ENCODE measurements at regions of chr20 and their contacts with region 1.

Region 1: DNA sequence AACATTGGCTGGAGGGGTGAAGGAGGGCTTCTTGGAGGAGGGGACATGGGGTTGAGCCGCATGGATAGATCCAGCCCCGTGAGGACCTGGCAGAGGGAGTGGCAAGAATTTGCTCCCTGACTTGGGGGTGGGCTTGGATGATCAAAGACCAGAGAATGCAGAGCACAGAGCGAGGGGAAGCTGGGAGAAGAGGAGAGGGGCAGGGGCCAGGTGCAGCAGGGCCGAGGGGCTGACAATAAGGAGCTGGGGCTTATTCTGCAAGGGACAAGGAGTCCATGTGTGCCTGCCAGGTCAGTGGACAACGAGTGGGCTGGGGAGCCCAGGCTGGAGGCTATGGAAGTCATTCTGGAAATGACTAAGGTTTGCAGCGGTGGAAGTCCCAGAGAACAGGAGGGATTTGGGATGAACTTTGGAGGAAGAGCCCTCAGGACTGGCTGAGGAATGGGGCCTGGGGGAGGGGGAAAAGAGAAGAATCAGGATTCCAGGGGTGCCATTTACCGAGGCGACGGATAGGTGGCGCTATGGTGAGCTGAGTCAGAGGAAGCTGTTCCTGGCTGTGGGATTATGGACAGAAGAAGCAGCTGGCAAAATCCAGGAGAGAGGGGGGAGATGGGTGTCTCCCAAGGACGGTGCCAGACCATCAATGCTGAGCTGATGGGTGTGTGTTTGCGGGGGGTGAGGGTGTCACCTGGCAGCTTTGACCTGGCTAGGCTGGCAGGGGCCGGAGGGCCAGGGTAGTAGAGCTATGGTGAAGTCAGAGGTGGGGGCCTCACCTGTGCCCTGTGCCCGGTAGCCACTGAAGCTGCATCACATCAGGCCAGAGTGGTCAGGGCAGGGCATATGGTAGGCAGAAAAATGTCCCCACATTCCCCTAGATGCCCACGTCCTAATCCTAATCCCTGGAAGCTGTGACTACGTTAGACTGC is 7.8 kb downstream of the KCNG1 start:
- DNase-seq: peak; percentile 87
- H3K4me3 ChIP-seq: no peak overlapping the region
- H3K27ac ChIP-seq: no peak overlapping the region; a peak in 1 of 4 replicates
- H3K4me1 ChIP-seq: peaks cover 0 to 34% of the 10 kb centered on the region in 2 experiments; a peak in 1 of 4 replicates
- H3K27me3 ChIP-seq: no peaks in the 10 kb centered on the region
- CTCF ChIP-seq: peak; percentile 81
- EP300 ChIP-seq: no peak
- RAD21 ChIP-seq: peak; percentile 83

Region 2: GRCh38 chr20:50762435-50763201 is 252.4 kb before region 1 on chr20:
- CTCF ChIA-PET with region 1: no interaction called
- POLR2A ChIA-PET with region 1: no interaction called
- DNase-seq: peak; percentile 58
- H3K4me3 ChIP-seq: peak overlapping the region in 1 of 2 experiments; percentile 0; a peak in 1 of 4 replicates
- H3K27ac ChIP-seq: peak overlapping the region; percentile 56 to 80
- H3K4me1 ChIP-seq: peaks cover 10 to 30% of the 10 kb centered on the region in 2 experiments; a peak in 3 of 4 replicates
- H3K27me3 ChIP-seq: no peaks in the 10 kb centered on the region
- CTCF ChIP-seq: no peak
- EP300 ChIP-seq: no peak; a peak in 2 of 4 replicates
- RAD21 ChIP-seq: no peak; the same call in 1 of the 2 replicates

Region 3: GRCh38 chr20:50943069-50943468 is 72.0 kb before region 1 on chr20:
- CTCF ChIA-PET with region 1: no interaction called
- POLR2A ChIA-PET with region 1: no interaction called
- DNase-seq: no peak
- H3K4me3 ChIP-seq: no peak overlapping the region
- H3K27ac ChIP-seq: no peak overlapping the region
- H3K4me1 ChIP-seq: no peaks in the 10 kb centered on the region
- H3K27me3 ChIP-seq: no peaks in the 10 kb centered on the region
- CTCF ChIP-seq: no peak
- EP300 ChIP-seq: no peak
- RAD21 ChIP-seq: no peak

Region 4: GRCh38 chr20:50992733-50993457 is 22.2 kb before region 1 on chr20:
- CTCF ChIA-PET with region 1: interaction called, 118 read pairs
- POLR2A ChIA-PET with region 1: no interaction called
- DNase-seq: peak; percentile 83
- H3K4me3 ChIP-seq: no peak overlapping the region; a peak in 1 of 4 replicates
- H3K27ac ChIP-seq: no peak overlapping the region
- H3K4me1 ChIP-seq: no peaks in the 10 kb centered on the region
- H3K27me3 ChIP-seq: no peaks in the 10 kb centered on the region
- CTCF ChIP-seq: peak; percentile 67
- EP300 ChIP-seq: no peak
- RAD21 ChIP-seq: peak; percentile 79

Region 5: DNA sequence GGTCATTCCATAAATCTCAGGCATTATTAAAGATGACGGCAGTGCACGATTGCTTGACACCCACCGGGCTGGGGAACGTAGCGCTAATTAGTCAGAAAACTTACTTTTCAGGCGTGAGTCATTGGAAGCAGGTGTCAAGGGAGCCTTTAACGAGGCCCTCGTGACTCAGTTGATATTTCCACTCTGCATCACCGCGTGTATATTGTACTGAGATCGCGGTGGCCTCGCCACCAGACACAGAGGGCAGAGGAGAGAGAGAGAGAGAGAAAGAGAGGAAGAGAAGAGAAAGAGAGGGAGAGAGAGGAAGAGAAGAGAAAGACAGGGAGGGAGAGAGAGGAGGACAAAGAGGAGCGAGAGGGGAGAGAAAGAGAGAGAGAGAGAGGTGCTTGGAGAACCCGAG is 13.3 kb before region 1 on chr20:
- CTCF ChIA-PET with region 1: interaction called, 118 read pairs
- POLR2A ChIA-PET with region 1: no interaction called
- DNase-seq: no peak
- H3K4me3 ChIP-seq: no peak overlapping the region
- H3K27ac ChIP-seq: no peak overlapping the region
- H3K4me1 ChIP-seq: no peaks in the 10 kb centered on the region
- H3K27me3 ChIP-seq: no peaks in the 10 kb centered on the region
- CTCF ChIP-seq: no peak
- EP300 ChIP-seq: no peak
- RAD21 ChIP-seq: no peak

Region 6: GRCh38 chr20:51029963-51030920 is 15.2 kb after region 1 on chr20:
- CTCF ChIA-PET with region 1: interaction called, 12 read pairs
- POLR2A ChIA-PET with region 1: no interaction called
- DNase-seq: no peak
- H3K4me3 ChIP-seq: no peak overlapping the region
- H3K27ac ChIP-seq: no peak overlapping the region
- H3K4me1 ChIP-seq: peaks cover 0 to 18% of the 10 kb centered on the region in 2 experiments; a peak in 2 of 4 replicates
- H3K27me3 ChIP-seq: no peaks in the 10 kb centered on the region; the same call in 1 of the 2 replicates
- CTCF ChIP-seq: no peak
- EP300 ChIP-seq: no peak
- RAD21 ChIP-seq: no peak

Region 7: GRCh38 chr20:51156041-51156982 is 141.3 kb after region 1 on chr20:
- CTCF ChIA-PET with region 1: interaction called, 11 read pairs
- POLR2A ChIA-PET with region 1: interaction called, 5 read pairs
- DNase-seq: peak; percentile 77
- H3K4me3 ChIP-seq: no peak overlapping the region
- H3K27ac ChIP-seq: peak overlapping the region in 1 of 2 experiments; percentile 99; a peak in 2 of 4 replicates
- H3K4me1 ChIP-seq: peaks cover 0 to 47% of the 10 kb centered on the region in 2 experiments; a peak in 2 of 4 replicates
- H3K27me3 ChIP-seq: peaks cover 44% of the 10 kb centered on the region
- CTCF ChIP-seq: no peak
- EP300 ChIP-seq: peak in 1 of 2 experiments; percentile 99; a peak in 2 of 4 replicates
- RAD21 ChIP-seq: peak; percentile 35; the same call in 1 of the 2 replicates

Region 8: DNA sequence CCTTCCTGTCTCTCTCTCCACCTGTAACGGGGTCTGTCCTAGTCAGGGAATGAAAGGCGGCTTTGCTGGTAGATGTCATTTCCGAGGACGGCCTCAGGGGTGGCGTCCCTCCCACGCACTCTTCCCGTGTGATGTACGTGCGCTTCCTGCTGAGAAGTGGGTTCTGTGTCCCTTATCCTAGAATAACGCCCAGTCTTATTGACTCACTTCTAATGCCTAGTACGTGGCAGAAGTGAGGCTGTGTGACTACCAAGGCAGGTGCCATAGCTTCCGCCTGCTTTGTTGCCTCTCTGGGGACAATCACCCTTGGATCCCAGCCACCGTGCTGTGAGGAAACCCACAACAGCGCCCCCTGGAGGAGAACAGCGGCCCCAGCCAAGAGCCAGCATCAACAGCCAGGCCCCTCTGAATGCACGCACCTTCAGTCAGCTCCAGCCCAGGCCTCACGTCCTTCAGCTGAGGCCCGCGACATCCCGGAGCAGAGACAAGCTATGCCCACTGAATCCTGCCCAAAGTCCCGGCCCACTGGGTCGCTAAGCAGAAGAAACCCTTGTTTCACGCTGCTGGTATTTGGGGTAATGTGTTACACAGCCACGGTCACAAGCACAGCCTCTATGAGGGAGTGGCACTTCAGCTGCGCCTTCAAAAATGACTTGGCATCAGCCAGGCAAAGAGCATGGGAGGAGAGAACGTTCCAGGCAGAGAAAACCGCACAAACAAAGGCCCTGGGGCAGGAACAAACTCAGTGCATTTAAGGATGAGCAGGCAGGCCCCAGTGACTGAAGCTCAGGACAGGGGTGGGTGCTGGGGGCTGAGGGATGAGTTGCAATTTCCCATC is 303.2 kb after region 1 on chr20:
- CTCF ChIA-PET with region 1: interaction called, 12 read pairs
- POLR2A ChIA-PET with region 1: no interaction called
- DNase-seq: peak; percentile 78
- H3K4me3 ChIP-seq: no peak overlapping the region; a peak in 1 of 4 replicates
- H3K27ac ChIP-seq: no peak overlapping the region
- H3K4me1 ChIP-seq: no peaks in the 10 kb centered on the region; a peak in 1 of 4 replicates
- H3K27me3 ChIP-seq: no peaks in the 10 kb centered on the region
- CTCF ChIP-seq: peak; percentile 60
- EP300 ChIP-seq: no peak
- RAD21 ChIP-seq: peak; percentile 53

Region 9: GRCh38 chr20:51569827-51570738 is 555.0 kb after region 1 on chr20:
- CTCF ChIA-PET with region 1: no interaction called
- POLR2A ChIA-PET with region 1: no interaction called
- DNase-seq: no peak
- H3K4me3 ChIP-seq: no peak overlapping the region
- H3K27ac ChIP-seq: no peak overlapping the region
- H3K4me1 ChIP-seq: peaks cover 0 to 3% of the 10 kb centered on the region in 2 experiments; a peak in 1 of 4 replicates
- H3K27me3 ChIP-seq: no peaks in the 10 kb centered on the region
- CTCF ChIP-seq: no peak
- EP300 ChIP-seq: no peak
- RAD21 ChIP-seq: no peak

Measured in SK-N-SH (cell line).